Tibial artery (tissue), 4 donors: ENCODE measurements at regions of chr6 and their contacts with region 1.

Region 1: GRCh38 chr6:10747251-10747972 is at the start of gene TMEM14B:
- DNase-seq: peak; percentile 99 to 100
- H3K4me3 ChIP-seq: peak within 1 kb of the TSS; percentile 62 to 85
- H3K27ac ChIP-seq: peak within 1 kb of the TSS; percentile 80 to 85
- H3K4me1 ChIP-seq: peaks cover 0 to 25% (median 19%) of the 10 kb centered on the region in 4 donors
- H3K27me3 ChIP-seq: no peaks in the 10 kb centered on the region
- CTCF ChIP-seq: no peak

Region 2: DNA sequence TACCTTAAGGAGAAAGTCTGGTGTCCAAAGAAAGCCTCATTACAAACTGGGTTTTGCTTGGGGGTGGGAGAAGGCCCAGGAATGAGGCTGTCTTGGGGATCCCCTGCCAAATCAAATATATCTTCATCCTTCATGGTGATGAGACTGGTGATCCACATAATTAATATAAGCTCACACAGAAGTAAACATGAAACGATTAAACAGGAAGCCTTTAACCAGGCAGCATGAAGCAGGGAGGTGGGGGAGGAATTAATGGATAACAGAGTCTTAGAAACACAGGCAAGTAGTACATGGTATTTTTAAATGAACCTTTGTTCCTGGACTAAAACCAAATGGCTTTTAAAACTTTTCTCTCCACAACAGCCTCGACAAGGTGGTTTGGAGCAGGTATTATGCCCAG is 770.0 kb before region 1 on chr6:
- intact Hi-C with region 1: no loop called
- DNase-seq: no peak
- H3K4me3 ChIP-seq: no peak overlapping the region
- H3K27ac ChIP-seq: no peak overlapping the region
- H3K4me1 ChIP-seq: no peaks in the 10 kb centered on the region
- H3K27me3 ChIP-seq: no peaks in the 10 kb centered on the region
- CTCF ChIP-seq: no peak

Region 3: DNA sequence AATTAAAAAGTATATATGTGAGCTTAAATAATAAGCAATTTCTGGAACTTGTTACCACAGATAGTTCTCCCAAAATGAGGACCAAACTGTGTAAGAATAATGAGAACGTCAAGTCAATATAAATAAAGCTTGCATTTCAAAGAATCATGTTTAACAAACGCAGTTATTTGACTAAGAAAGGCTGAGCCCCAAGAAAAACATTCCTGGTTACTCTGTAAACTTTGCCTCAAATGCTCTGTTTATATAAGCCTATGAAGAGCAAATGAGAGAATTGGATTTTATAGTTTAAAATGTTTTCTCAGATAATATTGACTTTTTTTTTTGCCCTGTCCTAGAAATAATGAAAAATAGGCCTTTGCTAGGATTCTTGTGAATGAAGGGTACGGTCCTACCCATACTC is 134.3 kb before region 1 on chr6:
- intact Hi-C with region 1: no loop called
- DNase-seq: no peak
- H3K4me3 ChIP-seq: no peak overlapping the region
- H3K27ac ChIP-seq: no peak overlapping the region
- H3K4me1 ChIP-seq: peaks cover 0 to 17% (median 7%) of the 10 kb centered on the region in 4 donors
- H3K27me3 ChIP-seq: no peaks in the 10 kb centered on the region
- CTCF ChIP-seq: no peak

Region 4: GRCh38 chr6:10694302-10695085 is 52.9 kb before region 1 on chr6 and contains the starts of genes C6orf52 and PAK1IP1:
- intact Hi-C with region 1: loop called (anchors 2 kb)
- DNase-seq: peak; percentile 93 to 96
- H3K4me3 ChIP-seq: peak within 1 kb of the TSS; percentile 80 to 86
- H3K27ac ChIP-seq: peak within 1 kb of the TSS; percentile 91
- H3K4me1 ChIP-seq: peaks cover 0 to 29% (median 24%) of the 10 kb centered on the region in 4 donors
- H3K27me3 ChIP-seq: no peaks in the 10 kb centered on the region
- CTCF ChIP-seq: no peak

Region 5: GRCh38 chr6:10722820-10723566 is 24.4 kb before region 1 on chr6 and contains the start of gene TMEM14C:
- intact Hi-C with region 1: loop called (anchors 1 kb)
- DNase-seq: peak; percentile 100
- H3K4me3 ChIP-seq: peak within 1 kb of the TSS; percentile 71 to 73
- H3K27ac ChIP-seq: peak within 1 kb of the TSS; percentile 78 to 92
- H3K4me1 ChIP-seq: peaks cover 7 to 47% (median 27%) of the 10 kb centered on the region in 4 donors
- H3K27me3 ChIP-seq: no peaks in the 10 kb centered on the region
- CTCF ChIP-seq: no peak

Region 6: GRCh38 chr6:10733151-10733715 is 14.2 kb before region 1 on chr6:
- intact Hi-C with region 1: no loop called
- DNase-seq: no peak
- H3K4me3 ChIP-seq: no peak overlapping the region
- H3K27ac ChIP-seq: no peak overlapping the region
- H3K4me1 ChIP-seq: peaks cover 0 to 6% (median 0%) of the 10 kb centered on the region in 4 donors
- H3K27me3 ChIP-seq: no peaks in the 10 kb centered on the region
- CTCF ChIP-seq: no peak